IMR-90 (cell line): ENCODE measurements at regions of chr20 and their contacts with region 1.

Region 1: GRCh38 chr20:42392442-42392841 is 774.3 kb upstream of the CHD6 start:
- DNase-seq: no peak
- ATAC-seq: no peak
- H3K4me3 ChIP-seq: no peak overlapping the region
- H3K27ac ChIP-seq: no peak overlapping the region
- H3K4me1 ChIP-seq: no peaks in the 10 kb centered on the region
- H3K27me3 ChIP-seq: no peaks in the 10 kb centered on the region
- CTCF ChIP-seq: no peak
- POLR2A ChIP-seq: no peak
- RAD21 ChIP-seq: no peak

Region 2: DNA sequence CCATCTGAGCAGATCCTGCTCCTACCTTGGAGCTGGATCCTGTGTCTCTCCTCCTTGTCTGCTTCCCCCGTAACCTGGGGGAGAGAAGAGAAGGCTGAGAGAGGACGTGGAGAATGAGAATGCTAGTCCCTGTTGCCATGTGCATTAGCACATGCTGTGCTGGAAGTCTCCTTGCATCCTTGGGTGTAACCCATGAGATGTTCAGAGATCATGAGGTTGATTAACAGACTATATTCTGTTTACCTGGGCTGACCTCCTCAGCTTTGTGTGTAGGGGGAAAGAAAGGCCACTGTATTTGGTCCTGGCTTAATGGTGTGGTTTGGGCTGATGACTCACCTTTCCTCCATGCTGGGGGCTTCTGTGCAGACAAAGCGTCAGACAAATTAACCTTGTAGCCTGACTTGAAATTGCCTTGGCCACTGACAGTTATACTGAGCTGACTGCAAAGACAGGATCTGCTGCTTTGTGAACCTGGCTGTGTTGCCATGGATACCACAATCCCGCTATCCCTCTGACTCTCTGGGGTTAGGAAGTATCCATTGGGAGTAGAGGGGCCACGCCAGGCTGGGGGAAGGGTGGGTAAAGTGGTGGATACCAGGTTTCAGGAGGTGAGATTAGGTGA is 530.5 kb before region 1 on chr20:
- CTCF ChIA-PET with region 1: no interaction called
- POLR2A ChIA-PET with region 1: no interaction called
- dilution Hi-C with region 1: no loop called
- in situ Hi-C with region 1: no loop called
- intact Hi-C with region 1: loop called (anchors 10 kb)
- DNase-seq: no peak
- ATAC-seq: no peak
- H3K4me3 ChIP-seq: no peak overlapping the region
- H3K27ac ChIP-seq: no peak overlapping the region
- H3K4me1 ChIP-seq: no peaks in the 10 kb centered on the region
- H3K27me3 ChIP-seq: no peaks in the 10 kb centered on the region
- CTCF ChIP-seq: no peak
- POLR2A ChIP-seq: no peak
- RAD21 ChIP-seq: no peak